ENCODE measurements at regions of chr1 and their contacts with region 1.

Region 1: GRCh38 chr1:200802009-200802408 is 63.3 kb downstream of the CAMSAP2 start:
- DNase-seq: no peak

Region 2: DNA sequence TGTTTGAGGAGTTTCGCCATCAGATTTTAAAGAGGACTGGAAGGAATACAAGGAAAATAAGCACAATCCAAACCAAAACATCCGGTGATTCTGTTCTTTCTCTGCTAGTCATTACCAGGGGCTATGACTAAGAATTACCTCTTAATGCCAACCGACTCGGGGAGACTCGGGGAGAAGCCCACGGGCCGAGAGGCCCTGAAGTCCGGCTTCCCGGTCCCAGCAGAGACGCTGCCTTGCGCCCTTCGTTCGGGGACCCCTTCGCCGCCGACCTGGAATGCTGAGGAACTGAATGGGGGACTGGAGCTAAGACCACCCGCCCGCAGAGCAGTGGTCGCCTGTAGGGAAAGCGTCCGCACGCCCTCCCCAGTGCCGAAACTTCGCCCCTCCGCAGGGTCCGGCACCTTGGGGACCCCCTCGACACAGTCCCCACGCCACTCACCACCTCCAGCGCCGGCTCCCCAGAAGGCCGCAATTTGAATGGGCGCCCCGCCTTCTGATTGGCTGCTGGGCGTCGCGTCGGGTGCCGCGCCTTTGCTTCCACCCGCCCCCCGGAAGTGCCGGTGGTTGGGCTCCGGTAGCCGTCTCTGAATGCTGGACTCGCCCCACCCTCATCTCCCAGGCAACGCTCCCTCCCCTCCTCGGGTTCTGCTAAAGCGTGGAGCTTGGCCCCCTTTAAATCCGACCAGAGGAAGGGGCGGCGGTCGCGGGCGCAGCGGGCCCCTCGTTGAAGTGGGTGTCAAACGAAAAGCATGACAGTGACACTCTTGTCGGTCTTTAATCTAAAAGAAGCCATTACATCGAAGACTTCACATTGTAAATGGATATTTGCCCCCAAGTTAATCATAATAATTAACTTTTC is 181.5 kb before region 1 on chr1 and contains the start of gene KIF14:
- CTCF ChIA-PET with region 1: interaction called, 13 read pairs
- POLR2A ChIA-PET with region 1: no interaction called
- DNase-seq: peak; percentile 98

Region 3: DNA sequence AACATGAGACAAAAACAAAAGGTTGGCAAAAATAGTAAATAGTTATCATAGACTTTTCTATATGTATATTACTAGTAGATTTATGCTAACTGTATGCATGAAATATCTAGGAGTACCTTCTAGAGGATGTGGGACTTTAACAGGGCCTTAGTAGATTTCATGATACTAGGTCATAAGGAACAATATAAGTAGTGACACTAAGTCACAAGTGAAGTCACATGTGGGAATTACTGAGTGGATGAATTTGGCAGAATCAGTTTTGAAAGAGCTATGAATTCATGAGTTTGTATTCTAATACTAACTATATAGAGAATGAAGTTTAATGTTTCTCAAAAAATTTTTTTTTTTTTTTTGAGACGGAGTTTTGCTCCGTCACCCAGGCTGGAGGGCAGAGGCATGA is 17.7 kb after region 1 on chr1:
- CTCF ChIA-PET with region 1: no interaction called
- POLR2A ChIA-PET with region 1: no interaction called
- DNase-seq: no peak